A673 (cell line): ENCODE measurements at regions of chr12 and their contacts with region 1.

Region 1: DNA sequence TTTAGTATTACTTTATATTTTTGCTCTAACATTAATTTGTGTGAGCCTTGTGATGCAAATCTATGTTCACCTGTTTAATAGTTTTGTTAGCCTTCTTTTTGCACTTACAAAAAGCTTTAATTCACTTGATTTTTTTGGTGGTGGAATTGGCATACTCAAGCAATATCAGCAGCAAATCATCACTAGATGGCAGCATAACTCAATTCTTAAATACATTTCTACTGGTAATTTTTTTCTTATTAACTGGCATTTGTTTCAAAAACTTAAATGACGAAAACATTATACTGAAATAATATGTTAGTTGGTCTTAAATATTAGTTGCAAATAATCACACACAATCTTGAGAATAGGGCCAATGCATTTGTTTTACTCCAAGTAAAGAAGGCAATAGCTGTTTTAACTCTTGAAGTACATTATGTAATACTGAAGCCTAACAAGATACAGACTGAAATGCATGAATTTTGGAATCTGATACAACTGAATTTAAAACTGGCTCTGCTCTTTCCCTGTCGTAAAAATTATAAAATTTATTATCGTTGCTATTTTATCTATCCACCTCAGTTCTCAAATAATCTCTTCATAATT is 151.5 kb downstream of the ATXN7L3B start:
- DNase-seq: peak; percentile 61
- H3K4me3 ChIP-seq: no peak overlapping the region
- H3K27ac ChIP-seq: no peak overlapping the region
- H3K4me1 ChIP-seq: no peaks in the 10 kb centered on the region
- H3K27me3 ChIP-seq: no peaks in the 10 kb centered on the region
- CTCF ChIP-seq: peak; percentile 77

Region 2: GRCh38 chr12:75087654-75088053 is 398.5 kb after region 1 on chr12:
- CTCF ChIA-PET with region 1: no interaction called
- POLR2A ChIA-PET with region 1: no interaction called
- intact Hi-C with region 1: loop called (anchors 10 kb)
- DNase-seq: peak; percentile 25
- H3K4me3 ChIP-seq: no peak overlapping the region
- H3K27ac ChIP-seq: no peak overlapping the region
- H3K4me1 ChIP-seq: no peaks in the 10 kb centered on the region
- H3K27me3 ChIP-seq: no peaks in the 10 kb centered on the region
- CTCF ChIP-seq: peak; percentile 34; the same call in 1 of the 2 replicates

Region 3: DNA sequence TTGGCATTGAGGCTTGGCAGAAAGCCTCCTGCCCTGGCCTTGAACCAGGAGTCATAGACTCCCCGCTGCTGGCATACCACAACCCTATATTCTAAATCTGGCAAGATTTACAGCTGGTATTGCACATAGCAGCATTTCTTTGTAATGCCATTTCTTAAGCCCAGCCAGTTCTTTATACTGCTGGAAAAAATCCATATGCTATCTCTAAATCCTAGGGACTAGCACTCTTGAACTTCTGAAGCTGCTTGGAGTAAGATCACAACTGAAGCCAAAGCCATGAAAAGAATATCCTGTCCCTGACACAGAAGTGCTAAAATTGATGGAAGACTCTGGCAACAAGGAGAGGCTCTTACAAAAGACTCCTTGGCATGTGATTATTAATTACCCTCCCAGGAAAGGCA is 431.1 kb after region 1 on chr12:
- CTCF ChIA-PET with region 1: no interaction called
- POLR2A ChIA-PET with region 1: no interaction called
- intact Hi-C with region 1: no loop called
- DNase-seq: peak; percentile 37
- H3K4me3 ChIP-seq: no peak overlapping the region
- H3K27ac ChIP-seq: no peak overlapping the region
- H3K4me1 ChIP-seq: peaks cover 18% of the 10 kb centered on the region
- H3K27me3 ChIP-seq: no peaks in the 10 kb centered on the region
- CTCF ChIP-seq: no peak

Region 4: DNA sequence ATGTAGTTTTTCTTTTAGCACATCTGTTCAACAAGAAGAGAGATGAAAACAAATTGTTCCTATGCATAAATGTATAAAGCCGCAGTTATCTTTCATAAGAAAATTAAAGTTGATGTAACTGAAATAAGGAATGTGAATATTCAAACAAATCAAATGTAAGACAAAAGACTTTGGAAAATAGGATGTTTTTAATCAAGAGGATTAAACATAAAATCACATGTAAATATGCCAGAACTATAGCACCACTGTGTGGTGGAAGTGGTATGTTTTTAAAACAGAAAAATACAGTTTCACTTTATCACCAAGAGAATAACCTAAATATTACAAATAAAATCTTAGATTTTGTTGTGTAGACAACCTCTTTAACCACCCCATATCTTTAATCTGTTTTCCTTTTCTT is 600.6 kb after region 1 on chr12:
- CTCF ChIA-PET with region 1: no interaction called
- POLR2A ChIA-PET with region 1: no interaction called
- intact Hi-C with region 1: loop called (anchors 2 kb)
- DNase-seq: peak; percentile 28
- H3K4me3 ChIP-seq: no peak overlapping the region
- H3K27ac ChIP-seq: no peak overlapping the region
- H3K4me1 ChIP-seq: no peaks in the 10 kb centered on the region
- H3K27me3 ChIP-seq: no peaks in the 10 kb centered on the region
- CTCF ChIP-seq: peak; percentile 51

Region 5: DNA sequence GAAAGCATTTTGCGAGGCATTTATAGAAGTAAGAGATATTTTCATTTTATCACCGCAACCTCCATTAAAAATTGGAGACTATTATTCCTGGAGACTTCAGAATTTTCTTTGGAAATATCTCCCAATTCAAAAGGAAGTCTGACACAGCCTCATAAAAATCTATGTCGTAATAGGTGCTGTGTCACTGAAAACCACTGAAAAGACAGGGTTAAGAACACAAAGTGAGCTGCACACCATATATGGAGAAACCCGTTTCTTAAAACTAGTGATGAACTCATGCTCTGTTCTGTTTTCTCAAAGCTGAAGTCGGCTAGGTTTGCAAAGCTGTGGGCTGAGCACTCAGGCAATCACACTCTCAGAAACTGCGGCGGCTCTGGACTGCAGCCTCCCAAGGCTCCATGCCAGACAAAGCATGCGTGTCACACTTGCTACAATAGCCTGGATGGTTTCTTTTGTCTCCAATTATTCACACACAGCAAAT is 791.3 kb after region 1 on chr12 and contains the start of gene GLIPR1:
- CTCF ChIA-PET with region 1: no interaction called
- POLR2A ChIA-PET with region 1: no interaction called
- intact Hi-C with region 1: loop called (anchors 10 kb)
- DNase-seq: peak; percentile 84
- H3K4me3 ChIP-seq: peak within 1 kb of the TSS; percentile 28
- H3K27ac ChIP-seq: peak within 1 kb of the TSS; percentile 65
- H3K4me1 ChIP-seq: peaks cover 27% of the 10 kb centered on the region
- H3K27me3 ChIP-seq: no peaks in the 10 kb centered on the region
- CTCF ChIP-seq: no peak
- total RNA-seq, gene GLIPR1: 11.3 and 19.7 TPM in 2 replicates

Region 6: DNA sequence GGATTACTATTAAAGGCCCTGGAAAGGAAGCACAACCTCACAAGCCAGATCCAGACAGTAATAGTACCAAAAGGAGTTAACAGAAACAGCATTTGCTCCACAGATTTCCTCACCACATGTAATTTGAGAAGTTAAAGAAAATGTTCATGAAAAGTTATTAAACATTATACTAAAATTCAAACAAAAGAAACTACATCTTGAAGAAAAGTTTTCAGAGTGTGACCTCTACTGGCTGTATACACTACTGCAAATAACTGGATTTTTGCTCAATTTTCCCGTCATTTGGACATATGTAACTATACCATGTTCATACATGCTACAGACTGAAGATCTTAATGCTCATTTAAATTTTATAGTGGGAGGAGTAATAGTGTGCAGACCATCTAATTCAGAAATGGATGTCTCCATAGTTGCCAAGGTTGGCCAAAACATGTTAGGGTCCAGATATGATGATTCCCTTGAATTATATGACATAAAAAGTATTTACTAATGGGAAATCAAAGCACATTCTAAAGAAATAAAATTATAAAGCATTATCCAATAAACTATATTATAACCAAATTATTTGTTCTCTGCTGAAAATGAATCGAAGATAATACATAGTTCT is 816.6 kb after region 1 on chr12:
- CTCF ChIA-PET with region 1: no interaction called
- POLR2A ChIA-PET with region 1: no interaction called
- intact Hi-C with region 1: loop called (anchors 5 kb)
- DNase-seq: peak; percentile 39
- H3K4me3 ChIP-seq: no peak overlapping the region
- H3K27ac ChIP-seq: no peak overlapping the region
- H3K4me1 ChIP-seq: peaks cover 5% of the 10 kb centered on the region
- H3K27me3 ChIP-seq: no peaks in the 10 kb centered on the region
- CTCF ChIP-seq: peak; percentile 73